ENCODE measurements at regions of chr16 and their contacts with region 1.

Region 1: DNA sequence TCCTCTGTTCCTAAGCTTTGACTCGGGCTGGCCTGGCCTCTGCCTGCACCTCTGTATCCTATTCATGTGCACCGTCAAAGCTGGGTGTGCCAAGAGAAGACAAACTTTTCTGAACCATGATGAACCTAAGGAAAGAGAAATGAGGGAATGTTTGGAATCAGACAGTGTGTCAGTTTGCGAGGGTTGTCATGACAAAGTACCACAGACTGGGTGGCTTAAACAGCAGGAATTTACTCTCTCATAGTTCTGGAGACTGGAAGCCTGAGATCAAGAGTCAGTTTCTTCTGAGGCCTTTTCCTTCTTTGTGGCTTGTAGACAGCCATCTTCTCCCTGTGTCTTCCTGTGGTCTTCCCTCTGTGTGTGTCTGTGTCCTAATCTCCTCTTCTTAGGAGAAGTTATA is 129.0 kb downstream of the KATNIP start:
- DNase-seq: no peak
- ATAC-seq: no peak
- H3K4me3 ChIP-seq: no peak overlapping the region
- H3K27ac ChIP-seq: no peak overlapping the region
- H3K4me1 ChIP-seq: no peaks in the 10 kb centered on the region
- H3K27me3 ChIP-seq: no peaks in the 10 kb centered on the region
- CTCF ChIP-seq: no peak

Region 2: DNA sequence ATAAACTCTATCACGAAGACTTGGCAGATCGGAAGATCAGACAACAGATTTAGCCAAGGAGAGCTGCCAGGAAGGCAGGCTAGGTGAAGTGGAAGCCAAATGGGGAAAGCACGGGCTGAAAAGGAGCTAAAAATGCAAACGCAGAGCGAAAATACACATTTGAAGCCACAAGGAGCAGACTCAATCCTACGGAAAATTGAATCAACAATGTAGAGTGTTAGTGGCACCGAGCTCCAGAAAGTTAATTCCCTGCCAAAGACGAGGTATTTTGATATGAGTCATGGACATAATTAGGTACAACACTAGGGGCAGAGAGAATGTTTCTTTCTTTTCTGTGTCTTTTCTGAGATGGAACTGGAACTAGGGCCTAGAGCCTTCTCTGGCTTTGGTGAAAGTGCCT is 363.9 kb after region 1 on chr16:
- CTCF ChIA-PET with region 1: no interaction called
- POLR2A ChIA-PET with region 1: interaction called, 10 read pairs
- in situ Hi-C with region 1: no loop called
- intact Hi-C with region 1: no loop called
- DNase-seq: no peak
- ATAC-seq: no peak
- H3K4me3 ChIP-seq: no peak overlapping the region
- H3K27ac ChIP-seq: no peak overlapping the region
- H3K4me1 ChIP-seq: peaks cover 4% of the 10 kb centered on the region; the same call in 1 of the 2 replicates
- H3K27me3 ChIP-seq: no peaks in the 10 kb centered on the region
- CTCF ChIP-seq: no peak